Endothelial cell of umbilical vein (primary cell): ENCODE measurements at regions of chr16 and their contacts with region 1.

Region 1: GRCh38 chr16:87368029-87368770 is 15.4 kb downstream of the FBXO31 start:
- DNase-seq: peak; percentile 73
- H3K4me3 ChIP-seq: no peak overlapping the region
- H3K27ac ChIP-seq: no peak overlapping the region
- H3K4me1 ChIP-seq: peaks cover 20% of the 10 kb centered on the region
- H3K27me3 ChIP-seq: no peaks in the 10 kb centered on the region
- CTCF ChIP-seq: no peak
- POLR2A ChIP-seq: no peak

Region 2: DNA sequence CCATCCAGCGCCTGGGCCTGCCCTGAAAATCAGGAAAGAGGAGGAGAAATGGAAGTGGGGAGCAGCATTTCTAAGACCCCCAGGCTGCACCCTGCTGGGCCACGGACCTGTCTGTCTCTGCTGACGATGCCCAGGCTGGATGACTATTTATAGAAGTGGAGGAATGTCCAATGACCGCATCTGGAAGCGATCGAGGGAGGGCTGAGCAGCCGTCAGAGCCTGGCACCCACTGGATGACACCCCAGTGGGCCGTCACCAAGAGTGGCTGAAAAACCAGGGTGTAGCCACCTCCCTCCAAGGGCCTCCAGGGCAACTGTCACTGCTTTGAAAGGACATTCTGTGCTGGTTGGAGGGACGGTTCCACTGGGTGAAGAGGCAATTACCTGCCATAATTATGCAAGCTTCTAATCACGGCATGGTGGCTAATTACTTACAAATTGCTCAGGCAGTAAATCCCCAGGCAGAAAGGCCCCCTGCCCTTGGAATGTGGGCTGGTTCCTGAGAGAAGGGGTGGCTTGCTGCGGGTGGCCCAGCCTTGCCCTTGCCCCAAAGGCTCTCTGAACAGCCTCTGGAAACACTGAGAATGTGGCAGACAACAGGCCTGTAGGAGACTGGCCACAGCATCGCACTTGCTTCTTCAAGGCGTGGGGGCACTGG is 383.1 kb before region 1 on chr16:
- CTCF ChIA-PET with region 1: no interaction called
- POLR2A ChIA-PET with region 1: no interaction called
- dilution Hi-C with region 1: no loop called
- intact Hi-C with region 1: no loop called
- DNase-seq: no peak
- H3K4me3 ChIP-seq: no peak overlapping the region
- H3K27ac ChIP-seq: no peak overlapping the region
- H3K4me1 ChIP-seq: no peaks in the 10 kb centered on the region
- H3K27me3 ChIP-seq: peaks cover 0 to 5% of the 10 kb centered on the region in 2 experiments
- CTCF ChIP-seq: no peak
- POLR2A ChIP-seq: no peak

Region 3: GRCh38 chr16:87062569-87063442 is 305.4 kb before region 1 on chr16:
- CTCF ChIA-PET with region 1: no interaction called
- POLR2A ChIA-PET with region 1: no interaction called
- dilution Hi-C with region 1: no loop called
- intact Hi-C with region 1: no loop called
- DNase-seq: peak; percentile 88
- H3K4me3 ChIP-seq: peak overlapping the region; percentile 24 to 93 (median 43)
- H3K27ac ChIP-seq: peak overlapping the region; percentile 92
- H3K4me1 ChIP-seq: peaks cover 49% of the 10 kb centered on the region
- H3K27me3 ChIP-seq: no peaks in the 10 kb centered on the region
- CTCF ChIP-seq: peak; percentile 80 to 83
- POLR2A ChIP-seq: no peak

Region 4: GRCh38 chr16:87332150-87332549 is 36.0 kb before region 1 on chr16:
- CTCF ChIA-PET with region 1: interaction called, 3 read pairs
- POLR2A ChIA-PET with region 1: no interaction called
- dilution Hi-C with region 1: no loop called
- intact Hi-C with region 1: loop called (anchors 5 kb)
- DNase-seq: no peak
- H3K4me3 ChIP-seq: no peak overlapping the region
- H3K27ac ChIP-seq: no peak overlapping the region
- H3K4me1 ChIP-seq: no peaks in the 10 kb centered on the region
- H3K27me3 ChIP-seq: no peaks in the 10 kb centered on the region
- CTCF ChIP-seq: no peak
- POLR2A ChIP-seq: no peak